HepG2 (cell line): ENCODE measurements at regions of chr12 and their contacts with region 1.

Region 1: DNA sequence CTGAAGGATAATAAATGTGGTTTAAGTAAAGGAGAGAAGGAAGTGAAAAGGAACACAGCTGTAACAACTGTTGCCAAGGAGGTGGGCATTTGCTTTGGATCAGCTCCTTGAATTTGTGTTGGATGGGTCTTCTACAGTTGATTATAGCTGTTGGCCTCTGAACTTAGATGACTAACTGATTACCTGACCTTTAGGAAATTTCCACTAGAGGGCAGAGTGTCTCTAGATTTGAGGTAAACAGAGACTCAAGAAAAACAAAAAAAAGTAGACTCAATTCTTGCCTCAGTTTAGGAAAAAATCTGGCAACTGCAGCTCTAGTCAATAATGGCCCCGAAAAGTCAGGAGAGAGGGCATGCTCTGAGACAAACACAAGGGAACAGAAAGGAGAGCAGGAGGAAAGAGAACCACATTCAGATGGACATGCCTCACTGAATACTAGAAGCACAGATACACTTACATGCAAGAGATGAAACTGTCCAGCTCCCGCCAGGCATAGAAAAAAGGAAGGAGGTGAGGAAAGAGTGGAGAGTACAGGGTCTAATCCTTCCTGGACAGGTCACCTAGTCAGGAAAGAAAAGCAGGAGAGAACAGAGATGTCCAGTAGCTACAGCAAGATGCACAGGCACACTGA is 20.6 kb downstream of the COX14 start:
- DNase-seq: peak; percentile 48
- ATAC-seq: peak; percentile 74
- H3K4me3 ChIP-seq: no peak overlapping the region
- H3K27ac ChIP-seq: no peak overlapping the region
- H3K4me1 ChIP-seq: no peaks in the 10 kb centered on the region
- H3K27me3 ChIP-seq: no peaks in the 10 kb centered on the region
- CTCF ChIP-seq: peak; percentile 72
- EP300 ChIP-seq: no peak
- POLR2A ChIP-seq: no peak
- RAD21 ChIP-seq: peak; percentile 44; the same call in 1 of the 2 replicates

Region 2: DNA sequence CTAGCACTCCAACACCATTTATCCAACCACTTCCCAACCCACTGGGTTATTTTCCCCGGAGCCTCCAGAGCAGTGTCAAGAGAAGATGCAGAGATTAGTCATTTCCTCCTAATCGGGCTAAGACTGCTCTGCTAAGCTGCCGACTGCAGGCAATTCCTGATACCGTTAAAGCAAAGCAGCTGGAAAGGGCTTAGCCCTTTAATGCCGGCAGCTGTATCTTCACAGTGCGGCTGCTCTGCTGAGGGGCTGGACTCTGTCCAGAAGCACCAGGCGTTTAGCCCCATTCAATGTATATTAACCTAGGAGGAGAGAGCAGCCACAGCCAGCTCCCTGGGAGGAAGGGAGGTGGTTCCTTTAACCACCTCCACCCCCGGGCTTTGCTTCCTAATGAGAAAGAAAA is 148.7 kb before region 1 on chr12:
- CTCF ChIA-PET with region 1: no interaction called
- POLR2A ChIA-PET with region 1: no interaction called
- in situ Hi-C with region 1: no loop called
- intact Hi-C with region 1: no loop called
- DNase-seq: no peak
- ATAC-seq: no peak
- H3K4me3 ChIP-seq: no peak overlapping the region
- H3K27ac ChIP-seq: no peak overlapping the region
- H3K4me1 ChIP-seq: peaks cover 70% of the 10 kb centered on the region
- H3K27me3 ChIP-seq: no peaks in the 10 kb centered on the region
- CTCF ChIP-seq: no peak
- EP300 ChIP-seq: no peak
- POLR2A ChIP-seq: no peak
- RAD21 ChIP-seq: no peak

Region 3: GRCh38 chr12:50174971-50175715 is 42.5 kb after region 1 on chr12:
- CTCF ChIA-PET with region 1: interaction called, 31 read pairs
- POLR2A ChIA-PET with region 1: no interaction called
- in situ Hi-C with region 1: loop called (anchors 5 kb)
- intact Hi-C with region 1: no loop called
- DNase-seq: peak; percentile 62
- ATAC-seq: no peak
- H3K4me3 ChIP-seq: no peak overlapping the region
- H3K27ac ChIP-seq: no peak overlapping the region
- H3K4me1 ChIP-seq: peaks cover 6% of the 10 kb centered on the region
- H3K27me3 ChIP-seq: no peaks in the 10 kb centered on the region
- CTCF ChIP-seq: peak; percentile 71
- EP300 ChIP-seq: no peak
- POLR2A ChIP-seq: no peak
- RAD21 ChIP-seq: peak; percentile 62; the same call in 1 of the 2 replicates